ENCODE measurements at regions of chr7 and their contacts with region 1.

Region 1: DNA sequence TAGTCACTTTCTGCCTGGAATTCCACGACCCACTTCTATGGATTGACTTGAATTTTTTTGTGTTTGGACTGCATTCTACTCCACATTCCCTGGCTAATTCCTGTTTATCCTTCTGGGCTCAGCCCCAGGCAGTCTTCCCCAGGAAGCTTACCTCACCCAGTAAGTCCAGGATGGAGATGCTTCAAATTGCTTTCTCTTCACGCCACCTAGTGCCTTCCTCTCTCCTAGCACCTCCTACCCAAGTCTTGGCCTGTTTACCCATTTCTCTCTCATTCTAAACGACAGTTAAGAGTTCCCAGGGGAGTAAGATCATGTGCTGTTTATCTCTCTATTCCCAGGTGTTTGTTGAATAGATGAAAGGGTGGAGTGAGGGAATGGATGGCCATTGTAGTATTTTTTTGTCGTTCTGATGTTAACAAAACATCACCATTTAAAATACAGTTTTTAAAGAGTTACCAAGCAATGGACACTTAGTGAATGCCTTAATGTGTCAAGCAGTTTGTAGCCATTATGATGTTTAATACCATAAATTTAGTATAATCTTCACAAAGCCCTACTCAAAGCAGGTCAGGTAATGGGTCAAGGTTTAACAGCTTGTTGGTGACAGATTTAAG is 45.5 kb upstream of the TARP start:
- DNase-seq: peak; percentile 88
- H3K4me3 ChIP-seq: no peak overlapping the region
- H3K27ac ChIP-seq: peak overlapping the region; percentile 53
- H3K4me1 ChIP-seq: peaks cover 22% of the 10 kb centered on the region
- CTCF ChIP-seq: peak; percentile 89

Region 2: DNA sequence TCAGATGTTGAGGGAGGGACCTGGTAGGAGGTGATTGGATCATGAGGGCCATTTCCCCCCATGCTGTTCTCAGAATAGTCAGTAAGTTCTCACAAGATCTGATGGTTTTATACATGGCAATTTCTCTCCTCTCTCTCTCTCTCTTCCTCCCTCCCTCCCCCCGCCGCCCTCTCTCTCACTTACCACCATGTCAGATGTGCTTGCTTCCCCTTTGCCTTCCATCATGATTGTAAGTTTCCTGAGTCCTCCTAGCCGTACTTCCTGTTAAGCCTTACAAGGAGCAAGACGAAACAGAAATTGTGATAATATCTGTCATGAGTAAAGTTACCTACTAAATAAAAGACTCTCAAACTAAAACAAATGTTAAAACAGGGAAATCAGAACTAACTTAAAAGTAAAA is 655.2 kb before region 1 on chr7:
- CTCF ChIA-PET with region 1: no interaction called
- POLR2A ChIA-PET with region 1: no interaction called
- intact Hi-C with region 1: no loop called
- DNase-seq: no peak
- H3K4me3 ChIP-seq: no peak overlapping the region
- H3K27ac ChIP-seq: no peak overlapping the region
- H3K4me1 ChIP-seq: no peaks in the 10 kb centered on the region
- CTCF ChIP-seq: no peak

Region 3: DNA sequence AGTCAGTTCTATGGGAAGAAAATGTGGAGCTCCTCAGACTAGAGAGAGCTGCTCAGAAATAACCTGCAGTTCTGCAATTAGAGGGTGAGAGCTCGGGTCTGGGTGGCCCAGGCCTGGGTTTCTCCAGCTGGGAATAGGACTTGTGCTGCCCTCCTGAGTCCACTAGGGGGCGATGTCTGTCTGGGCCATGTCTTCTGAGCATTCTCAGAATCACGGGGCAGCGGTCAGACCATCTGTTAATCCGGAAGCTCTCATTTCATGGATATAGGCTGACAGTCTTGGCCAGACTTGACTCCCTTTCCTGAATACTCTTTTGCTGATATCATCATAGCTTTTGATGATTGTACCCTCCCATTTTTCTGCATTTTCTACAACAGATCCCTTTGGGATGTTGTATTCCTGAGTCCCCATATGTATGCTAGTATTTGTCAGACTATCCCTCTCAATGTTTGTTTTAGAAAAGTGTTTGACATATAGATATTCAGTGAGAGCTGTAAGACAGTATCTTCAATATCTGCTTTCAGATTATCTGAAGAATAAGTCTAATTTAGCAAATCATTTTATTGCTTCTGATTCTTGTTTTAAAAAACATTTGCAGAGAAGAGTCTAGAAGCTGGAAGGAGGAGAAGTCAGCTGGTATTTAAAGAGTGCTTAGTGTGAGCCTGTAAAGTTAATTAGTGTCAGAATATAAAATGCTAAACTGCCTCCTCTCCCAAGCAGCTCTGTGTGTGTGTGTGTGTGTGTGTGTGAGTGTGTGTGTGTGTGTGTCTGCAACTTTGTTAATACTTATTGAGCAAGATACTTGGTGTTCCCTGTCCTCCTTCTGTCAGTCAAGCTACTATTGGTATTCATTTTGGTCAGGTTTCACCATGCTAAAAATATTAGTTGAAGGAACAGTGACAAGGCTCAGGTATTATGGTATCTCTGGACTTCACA is 102.9 kb before region 1 on chr7:
- CTCF ChIA-PET with region 1: interaction called, 13 read pairs
- POLR2A ChIA-PET with region 1: no interaction called
- intact Hi-C with region 1: loop called (anchors 1 kb)
- DNase-seq: peak; percentile 71
- H3K4me3 ChIP-seq: no peak overlapping the region
- H3K27ac ChIP-seq: no peak overlapping the region
- H3K4me1 ChIP-seq: no peaks in the 10 kb centered on the region
- CTCF ChIP-seq: peak; percentile 96

Region 4: GRCh38 chr7:38222481-38223096 is 96.3 kb before region 1 on chr7:
- CTCF ChIA-PET with region 1: interaction called, 3 read pairs
- POLR2A ChIA-PET with region 1: interaction called, 5 read pairs
- intact Hi-C with region 1: loop called (anchors 2 kb)
- DNase-seq: peak; percentile 63
- H3K4me3 ChIP-seq: no peak overlapping the region
- H3K27ac ChIP-seq: no peak overlapping the region
- H3K4me1 ChIP-seq: no peaks in the 10 kb centered on the region
- CTCF ChIP-seq: peak; percentile 94

Measured in OCI-LY7 (cell line).